ENCODE measurements at regions of chr16 and their contacts with region 1.

Region 1: GRCh38 chr16:87853411-87854052 is 15.8 kb downstream of the SLC7A5 start:
- DNase-seq: peak; percentile 65 to 92
- H3K4me3 ChIP-seq: peak overlapping the region in 1 of 4 experiments; percentile 14; a peak in 1 of 8 replicates
- H3K27ac ChIP-seq: peak overlapping the region; percentile 48; the same call in 1 of the 2 replicates
- H3K4me1 ChIP-seq: peaks cover 16 to 46% (median 33%) of the 10 kb centered on the region in 4 experiments
- H3K27me3 ChIP-seq: no peaks in the 10 kb centered on the region
- CTCF ChIP-seq: no peak
- EP300 ChIP-seq: no peak
- POLR2A ChIP-seq: peak in 1 of 2 experiments; percentile 47; a peak in 1 of 3 replicates
- RAD21 ChIP-seq: no peak

Region 2: GRCh38 chr16:87692760-87693159 is 160.8 kb before region 1 on chr16:
- CTCF ChIA-PET with region 1: no interaction called
- POLR2A ChIA-PET with region 1: no interaction called
- DNase-seq: no peak
- H3K4me3 ChIP-seq: no peak overlapping the region
- H3K27ac ChIP-seq: no peak overlapping the region
- H3K4me1 ChIP-seq: no peaks in the 10 kb centered on the region; a peak in 1 of 7 replicates
- H3K27me3 ChIP-seq: no peaks in the 10 kb centered on the region
- CTCF ChIP-seq: peak in 1 of 3 experiments; percentile 20; a peak in 1 of 4 replicates
- EP300 ChIP-seq: no peak
- POLR2A ChIP-seq: no peak
- RAD21 ChIP-seq: no peak; a peak in 1 of 4 replicates

Region 3: GRCh38 chr16:87765776-87766484 is 87.6 kb before region 1 on chr16 and contains the start of gene KLHDC4:
- CTCF ChIA-PET with region 1: interaction called, 11 read pairs
- POLR2A ChIA-PET with region 1: no interaction called
- DNase-seq: peak; percentile 49 to 95
- H3K4me3 ChIP-seq: peak within 1 kb of the TSS; percentile 90 to 97 (median 92)
- H3K27ac ChIP-seq: peak within 1 kb of the TSS; percentile 48
- H3K4me1 ChIP-seq: peaks cover 0 to 4% (median 2%) of the 10 kb centered on the region in 4 experiments; a peak in 3 of 7 replicates
- H3K27me3 ChIP-seq: no peaks in the 10 kb centered on the region
- CTCF ChIP-seq: no peak
- EP300 ChIP-seq: no peak
- POLR2A ChIP-seq: peak; percentile 70 to 88
- RAD21 ChIP-seq: no peak
- total RNA-seq, gene KLHDC4: 55.6 and 63.9 TPM in 2 replicates

Region 4: DNA sequence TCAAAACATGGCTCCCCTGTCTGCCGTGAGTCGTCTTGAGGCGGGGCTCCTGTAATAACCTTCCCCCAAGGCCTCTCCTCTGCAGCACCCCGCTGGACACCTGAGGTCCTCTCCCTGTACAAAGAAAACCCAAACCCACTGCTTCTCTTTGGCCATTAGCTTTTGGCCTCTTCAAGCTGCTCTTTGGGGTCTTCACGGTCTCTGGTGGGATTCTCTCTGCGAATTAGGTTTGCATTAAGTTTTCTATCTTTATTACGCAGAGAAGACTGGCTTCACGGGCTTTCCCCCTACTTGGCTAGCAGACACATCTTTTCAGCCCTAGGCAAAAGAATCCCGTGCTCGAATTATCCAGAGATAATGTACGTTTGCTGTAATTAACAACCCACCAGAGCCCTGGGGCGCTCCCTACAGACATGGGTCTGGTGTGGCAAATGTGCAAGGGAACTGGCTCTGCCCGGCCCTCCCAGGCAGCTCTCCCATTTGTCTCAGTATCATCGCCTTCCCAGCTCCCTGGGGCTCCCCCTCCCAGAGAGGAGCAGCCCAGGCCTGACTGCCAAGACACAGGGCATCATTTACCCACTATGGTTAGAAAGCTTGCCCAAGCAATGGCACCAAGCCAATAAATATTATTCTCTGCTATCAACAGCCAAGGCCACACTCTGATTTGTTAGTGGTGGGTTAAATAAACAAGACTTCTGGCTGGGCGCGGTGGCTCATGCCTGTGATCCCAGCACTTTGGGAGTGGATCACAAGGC is 63.1 kb before region 1 on chr16:
- CTCF ChIA-PET with region 1: interaction called, 16 read pairs
- POLR2A ChIA-PET with region 1: interaction called, 4 read pairs
- DNase-seq: no peak
- H3K4me3 ChIP-seq: no peak overlapping the region
- H3K27ac ChIP-seq: no peak overlapping the region
- H3K4me1 ChIP-seq: no peaks in the 10 kb centered on the region
- H3K27me3 ChIP-seq: no peaks in the 10 kb centered on the region
- CTCF ChIP-seq: no peak
- EP300 ChIP-seq: no peak
- POLR2A ChIP-seq: no peak
- RAD21 ChIP-seq: no peak

Region 5: DNA sequence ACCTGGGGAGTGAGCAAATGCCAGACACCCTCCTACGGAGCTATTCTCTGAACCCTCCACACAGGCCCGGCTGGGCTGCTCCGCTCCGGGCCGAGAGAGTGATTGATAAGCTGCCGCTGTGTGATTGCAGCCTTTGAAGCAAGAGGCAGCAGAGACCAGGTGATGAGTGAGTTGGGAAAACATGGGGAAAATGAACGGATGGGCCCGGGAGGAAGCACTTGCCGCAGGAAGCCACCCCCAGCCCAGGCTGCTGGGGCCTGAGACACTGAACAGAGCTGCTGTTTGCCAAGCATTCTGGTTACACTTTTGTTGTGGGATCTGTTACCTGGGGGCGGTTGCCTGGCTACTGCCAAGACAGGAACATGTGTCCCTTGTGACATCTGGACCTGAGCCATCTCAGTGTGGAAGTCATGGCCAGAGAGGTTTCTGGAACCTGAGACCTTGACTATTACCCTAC is 41.3 kb before region 1 on chr16:
- CTCF ChIA-PET with region 1: interaction called, 28 read pairs
- POLR2A ChIA-PET with region 1: interaction called, 16 read pairs
- DNase-seq: no peak
- H3K4me3 ChIP-seq: no peak overlapping the region
- H3K27ac ChIP-seq: no peak overlapping the region
- H3K4me1 ChIP-seq: peaks cover 0 to 2% (median 0%) of the 10 kb centered on the region in 4 experiments; a peak in 3 of 7 replicates
- H3K27me3 ChIP-seq: no peaks in the 10 kb centered on the region
- CTCF ChIP-seq: peak in 2 of 3 experiments; percentile 16 to 25; a peak in 2 of 4 replicates
- EP300 ChIP-seq: no peak
- POLR2A ChIP-seq: no peak
- RAD21 ChIP-seq: peak; percentile 35 to 46

Region 6: GRCh38 chr16:87828071-87828971 is 25.2 kb before region 1 on chr16:
- CTCF ChIA-PET with region 1: interaction called, 64 read pairs
- POLR2A ChIA-PET with region 1: interaction called, 27 read pairs
- DNase-seq: no peak
- H3K4me3 ChIP-seq: no peak overlapping the region
- H3K27ac ChIP-seq: no peak overlapping the region; the same call in 1 of the 2 replicates
- H3K4me1 ChIP-seq: peaks cover 6 to 47% (median 33%) of the 10 kb centered on the region in 4 experiments
- H3K27me3 ChIP-seq: no peaks in the 10 kb centered on the region
- CTCF ChIP-seq: no peak
- EP300 ChIP-seq: no peak
- POLR2A ChIP-seq: no peak
- RAD21 ChIP-seq: no peak

Region 7: DNA sequence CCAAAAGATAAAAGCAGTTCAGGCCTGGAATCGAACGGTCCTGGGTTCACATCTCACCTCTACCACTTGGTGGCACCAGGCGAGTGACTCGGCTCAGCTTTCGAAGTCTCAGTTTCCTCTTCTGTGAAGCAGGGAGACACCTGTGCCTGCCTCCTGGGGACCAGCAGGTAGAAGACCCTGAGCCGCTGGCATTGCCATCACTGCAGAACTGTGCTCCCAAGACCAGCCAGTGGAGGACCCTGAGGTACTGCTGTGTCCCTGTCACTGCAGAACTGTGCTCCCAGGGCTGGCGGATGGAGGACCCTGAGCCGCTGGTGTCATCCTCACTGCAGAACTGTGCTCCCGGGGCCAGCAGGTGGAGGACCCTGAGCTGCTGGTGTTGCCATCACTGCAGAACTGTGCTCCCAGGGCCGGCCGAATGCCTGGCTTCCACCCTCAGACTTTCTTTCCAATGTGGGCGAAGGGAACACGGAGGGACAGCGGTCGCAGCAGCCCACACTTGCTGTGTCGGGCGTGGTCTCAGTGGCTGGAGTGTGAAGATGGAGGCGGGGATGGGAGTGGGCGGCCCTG is 24.5 kb after region 1 on chr16:
- CTCF ChIA-PET with region 1: interaction called, 181 read pairs
- POLR2A ChIA-PET with region 1: interaction called, 507 read pairs
- DNase-seq: no peak
- H3K4me3 ChIP-seq: no peak overlapping the region
- H3K27ac ChIP-seq: no peak overlapping the region
- H3K4me1 ChIP-seq: peaks cover 3 to 26% (median 13%) of the 10 kb centered on the region in 4 experiments
- H3K27me3 ChIP-seq: no peaks in the 10 kb centered on the region; a peak in 1 of 7 replicates
- CTCF ChIP-seq: peak; percentile 12 to 55 (median 52); a peak in 3 of 4 replicates
- EP300 ChIP-seq: no peak
- POLR2A ChIP-seq: no peak
- RAD21 ChIP-seq: peak; percentile 8 to 40; a peak in 2 of 4 replicates

Region 8: GRCh38 chr16:87924422-87925298 is 71.1 kb after region 1 on chr16:
- CTCF ChIA-PET with region 1: interaction called, 19 read pairs
- POLR2A ChIA-PET with region 1: no interaction called
- DNase-seq: no peak
- H3K4me3 ChIP-seq: no peak overlapping the region
- H3K27ac ChIP-seq: no peak overlapping the region
- H3K4me1 ChIP-seq: peaks cover 0 to 21% (median 3%) of the 10 kb centered on the region in 4 experiments; a peak in 5 of 7 replicates
- H3K27me3 ChIP-seq: no peaks in the 10 kb centered on the region
- CTCF ChIP-seq: no peak
- EP300 ChIP-seq: no peak
- POLR2A ChIP-seq: no peak
- RAD21 ChIP-seq: no peak